IMR-90 (cell line): ENCODE measurements at regions of chr3 and their contacts with region 1.

Region 1: GRCh38 chr3:161274719-161275298 is 53.7 kb downstream of the NMD3 start:
- DNase-seq: peak; percentile 63
- ATAC-seq: peak; percentile 67
- H3K4me3 ChIP-seq: no peak overlapping the region
- H3K27ac ChIP-seq: no peak overlapping the region
- H3K4me1 ChIP-seq: peaks cover 2% of the 10 kb centered on the region; the same call in 1 of the 2 replicates
- H3K27me3 ChIP-seq: no peaks in the 10 kb centered on the region
- CTCF ChIP-seq: peak; percentile 75
- POLR2A ChIP-seq: no peak
- RAD21 ChIP-seq: peak; percentile 66

Region 2: DNA sequence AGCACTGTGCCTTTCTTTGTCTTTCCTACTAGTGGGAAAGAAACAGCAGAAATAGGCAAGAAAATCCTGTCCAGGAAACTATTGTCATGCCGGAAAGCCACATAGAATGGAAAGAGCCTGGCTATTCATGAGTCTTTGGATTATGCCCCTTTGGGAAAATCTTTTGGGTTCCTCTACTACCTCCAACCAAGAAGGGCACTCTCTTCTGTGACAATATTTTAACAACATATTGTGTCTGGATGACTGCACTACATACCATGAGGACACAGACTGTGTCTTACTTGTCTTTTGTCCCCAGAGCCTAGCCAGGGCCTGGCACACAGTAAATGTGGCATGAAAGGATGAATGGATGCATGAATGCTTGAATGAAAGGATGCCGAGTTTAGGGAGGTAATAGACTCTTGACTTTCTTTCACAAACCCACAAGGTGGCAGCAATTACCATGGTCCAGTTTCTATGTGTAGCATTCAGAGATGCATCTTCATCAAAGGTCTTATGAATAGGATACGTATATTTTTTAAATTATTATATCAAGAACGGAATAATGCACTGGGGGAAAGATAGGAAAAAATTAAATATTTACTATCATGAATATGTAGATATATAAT is 567.5 kb before region 1 on chr3:
- CTCF ChIA-PET with region 1: no interaction called
- POLR2A ChIA-PET with region 1: no interaction called
- dilution Hi-C with region 1: no loop called
- in situ Hi-C with region 1: no loop called
- intact Hi-C with region 1: loop called (anchors 10 kb)
- DNase-seq: peak; percentile 50
- ATAC-seq: peak; percentile 89
- H3K4me3 ChIP-seq: no peak overlapping the region
- H3K27ac ChIP-seq: no peak overlapping the region
- H3K4me1 ChIP-seq: peaks cover 3% of the 10 kb centered on the region; the same call in 1 of the 2 replicates
- H3K27me3 ChIP-seq: peaks cover 6% of the 10 kb centered on the region
- CTCF ChIP-seq: peak; percentile 51
- POLR2A ChIP-seq: no peak
- RAD21 ChIP-seq: peak; percentile 60

Region 3: DNA sequence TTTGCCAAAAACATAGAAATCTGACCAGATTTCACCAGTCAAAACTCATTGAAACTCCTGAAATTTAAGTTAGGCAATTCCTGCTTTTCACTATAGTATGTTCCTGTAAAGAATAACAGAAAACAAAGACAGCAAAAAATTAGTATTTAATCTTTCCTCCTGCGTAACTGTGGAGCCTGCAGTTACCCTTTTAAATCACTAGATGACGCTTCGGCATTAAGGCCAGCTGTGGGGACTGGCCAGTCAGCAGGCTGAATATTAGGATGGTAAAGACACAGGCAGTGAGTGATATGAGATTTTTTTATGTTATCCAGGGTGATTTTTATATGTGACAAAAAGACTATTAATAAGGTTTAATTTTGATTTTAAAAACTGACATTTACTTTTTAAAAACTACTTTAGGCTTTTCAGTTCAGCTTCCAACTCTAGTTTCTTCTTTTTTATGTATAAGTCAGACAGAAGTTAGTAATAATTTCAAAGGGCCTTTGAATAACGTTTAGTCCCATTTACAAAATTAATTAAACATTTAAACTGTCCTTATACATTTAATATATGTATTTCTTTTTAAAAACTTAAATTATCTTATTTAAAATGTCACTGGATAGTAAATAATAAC is 353.7 kb before region 1 on chr3:
- CTCF ChIA-PET with region 1: interaction called, 3 read pairs
- POLR2A ChIA-PET with region 1: no interaction called
- dilution Hi-C with region 1: no loop called
- in situ Hi-C with region 1: no loop called
- intact Hi-C with region 1: loop called (anchors 2 kb)
- DNase-seq: peak; percentile 39
- ATAC-seq: peak; percentile 98
- H3K4me3 ChIP-seq: no peak overlapping the region
- H3K27ac ChIP-seq: no peak overlapping the region
- H3K4me1 ChIP-seq: no peaks in the 10 kb centered on the region
- H3K27me3 ChIP-seq: no peaks in the 10 kb centered on the region; the same call in none of the 2 replicates
- CTCF ChIP-seq: peak; percentile 83
- POLR2A ChIP-seq: no peak
- RAD21 ChIP-seq: peak; percentile 74

Region 4: GRCh38 chr3:161104561-161105551 is 170.0 kb before region 1 on chr3 and contains the start of gene B3GALNT1:
- CTCF ChIA-PET with region 1: no interaction called
- POLR2A ChIA-PET with region 1: no interaction called
- dilution Hi-C with region 1: no loop called
- in situ Hi-C with region 1: no loop called
- intact Hi-C with region 1: loop called (anchors 5 kb)
- DNase-seq: peak; percentile 50
- ATAC-seq: peak; percentile 86
- H3K4me3 ChIP-seq: peak within 1 kb of the TSS; percentile 86
- H3K27ac ChIP-seq: peak within 1 kb of the TSS; percentile 34; the same call in 1 of the 2 replicates
- H3K4me1 ChIP-seq: no peaks in the 10 kb centered on the region
- H3K27me3 ChIP-seq: no peaks in the 10 kb centered on the region
- CTCF ChIP-seq: no peak
- POLR2A ChIP-seq: no peak
- RAD21 ChIP-seq: no peak
- total RNA-seq, gene B3GALNT1: 8.2 and 8.6 TPM in 2 replicates

Region 5: GRCh38 chr3:161409069-161409468 is 134.3 kb after region 1 on chr3:
- CTCF ChIA-PET with region 1: interaction called, 5 read pairs
- POLR2A ChIA-PET with region 1: no interaction called
- dilution Hi-C with region 1: no loop called
- in situ Hi-C with region 1: no loop called
- intact Hi-C with region 1: loop called (anchors 1 kb)
- DNase-seq: peak; percentile 23
- ATAC-seq: peak; percentile 75; the same call in 1 of the 2 replicates
- H3K4me3 ChIP-seq: no peak overlapping the region
- H3K27ac ChIP-seq: no peak overlapping the region
- H3K4me1 ChIP-seq: peaks cover 3% of the 10 kb centered on the region; the same call in 1 of the 2 replicates
- H3K27me3 ChIP-seq: no peaks in the 10 kb centered on the region
- CTCF ChIP-seq: peak; percentile 65
- POLR2A ChIP-seq: no peak
- RAD21 ChIP-seq: peak; percentile 60

Region 6: DNA sequence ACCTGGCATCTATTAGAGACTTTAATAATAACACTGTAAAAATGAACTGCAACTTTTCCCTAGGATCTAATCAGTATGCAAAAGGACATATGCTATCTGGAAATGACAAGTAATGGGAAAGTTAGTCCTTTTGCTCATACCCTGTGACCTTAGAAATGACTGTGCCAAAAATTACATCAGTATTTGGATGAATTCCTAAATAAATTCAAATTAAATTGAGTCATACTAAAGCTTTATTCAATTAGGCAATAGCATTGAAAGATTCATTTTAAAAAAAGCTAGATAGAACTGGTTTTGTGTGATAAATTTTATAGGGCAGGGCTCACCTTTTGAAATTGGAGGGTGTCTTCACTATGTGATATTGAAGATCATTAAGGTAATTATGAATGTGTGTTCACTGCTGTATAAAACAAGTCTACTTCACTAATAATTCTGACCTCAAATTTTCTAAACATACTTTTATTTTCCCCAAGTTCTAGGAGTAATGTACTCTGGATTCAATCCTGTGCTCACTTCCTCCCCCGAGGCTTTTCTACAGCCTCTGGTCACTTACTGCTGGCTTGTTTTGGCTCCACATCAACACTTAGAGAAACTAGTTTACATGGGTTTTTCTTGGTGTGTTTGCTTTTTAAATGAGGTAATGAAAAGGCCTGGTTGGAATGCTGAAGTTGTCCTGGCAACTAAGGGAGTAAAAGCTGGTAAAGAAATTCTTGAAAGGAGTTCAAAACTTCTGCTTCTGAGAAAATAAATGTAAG is 140.9 kb after region 1 on chr3:
- CTCF ChIA-PET with region 1: interaction called, 16 read pairs
- POLR2A ChIA-PET with region 1: no interaction called
- dilution Hi-C with region 1: no loop called
- in situ Hi-C with region 1: loop called (anchors 5 kb)
- intact Hi-C with region 1: no loop called
- DNase-seq: peak; percentile 85
- ATAC-seq: peak; percentile 78
- H3K4me3 ChIP-seq: no peak overlapping the region
- H3K27ac ChIP-seq: peak overlapping the region; percentile 83; the same call in 1 of the 2 replicates
- H3K4me1 ChIP-seq: peaks cover 10% of the 10 kb centered on the region
- H3K27me3 ChIP-seq: no peaks in the 10 kb centered on the region
- CTCF ChIP-seq: no peak
- POLR2A ChIP-seq: no peak
- RAD21 ChIP-seq: no peak

Region 7: DNA sequence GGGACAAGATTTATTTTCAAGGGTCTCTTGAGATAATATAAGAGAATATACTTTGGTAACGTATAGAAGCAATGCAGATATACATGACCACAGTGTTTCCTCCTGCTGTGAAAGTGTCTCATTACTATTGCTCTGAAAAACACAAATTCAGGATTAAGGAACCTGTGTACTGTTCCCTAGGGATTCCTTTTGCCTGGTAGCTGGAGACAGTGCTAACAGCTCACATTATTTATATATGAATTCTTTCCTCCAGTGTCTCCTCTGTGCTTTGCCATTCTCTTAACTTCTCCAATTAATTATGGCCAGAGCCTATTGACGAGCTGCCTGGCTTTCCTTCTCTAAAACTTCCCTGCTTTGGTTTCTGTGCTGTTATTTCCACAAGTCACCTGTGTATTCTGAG is 457.2 kb after region 1 on chr3:
- CTCF ChIA-PET with region 1: no interaction called
- POLR2A ChIA-PET with region 1: no interaction called
- dilution Hi-C with region 1: no loop called
- in situ Hi-C with region 1: no loop called
- intact Hi-C with region 1: no loop called
- DNase-seq: no peak
- ATAC-seq: no peak
- H3K4me3 ChIP-seq: no peak overlapping the region
- H3K27ac ChIP-seq: no peak overlapping the region
- H3K4me1 ChIP-seq: no peaks in the 10 kb centered on the region
- H3K27me3 ChIP-seq: no peaks in the 10 kb centered on the region
- CTCF ChIP-seq: no peak
- POLR2A ChIP-seq: no peak
- RAD21 ChIP-seq: no peak